ENCODE measurements at regions of chr10 and their contacts with region 1.

Region 1: DNA sequence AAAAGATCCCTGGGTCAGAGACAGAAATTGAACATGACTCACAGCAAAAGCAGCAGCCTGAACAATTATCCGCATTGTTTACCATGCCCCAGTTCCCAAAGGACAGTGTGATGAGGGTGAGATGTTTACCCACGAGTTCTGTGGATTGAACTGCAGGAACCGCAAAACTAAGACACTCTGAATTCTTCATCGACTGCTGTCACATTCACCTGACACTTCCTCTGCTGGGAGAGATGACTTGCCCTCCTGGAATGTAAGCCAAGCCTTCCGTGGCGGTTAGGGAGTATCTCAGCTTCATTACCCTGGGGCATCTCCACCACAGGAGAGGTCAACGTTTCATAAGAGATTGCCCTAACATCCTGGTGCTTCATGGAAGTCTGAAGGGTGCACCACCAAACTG is 374.6 kb upstream of the ADARB2 start:
- DNase-seq: peak; percentile 97
- H3K4me3 Mint-ChIP-seq: no peak overlapping the region
- H3K27ac Mint-ChIP-seq: peak overlapping the region; percentile 89
- H3K4me1 Mint-ChIP-seq: peaks cover 17% of the 10 kb centered on the region
- H3K27me3 Mint-ChIP-seq: no peaks in the 10 kb centered on the region
- CTCF ChIP-seq: no peak

Region 2: GRCh38 chr10:2122431-2123124 is 10.6 kb after region 1 on chr10:
- CTCF ChIA-PET with region 1: no interaction called
- POLR2A ChIA-PET with region 1: interaction called, 13 read pairs
- intact Hi-C with region 1: no loop called
- DNase-seq: peak; percentile 57
- H3K4me3 Mint-ChIP-seq: no peak overlapping the region
- H3K27ac Mint-ChIP-seq: peak overlapping the region; percentile 80
- H3K4me1 Mint-ChIP-seq: peaks cover 41% of the 10 kb centered on the region
- H3K27me3 Mint-ChIP-seq: no peaks in the 10 kb centered on the region
- CTCF ChIP-seq: no peak

Region 3: DNA sequence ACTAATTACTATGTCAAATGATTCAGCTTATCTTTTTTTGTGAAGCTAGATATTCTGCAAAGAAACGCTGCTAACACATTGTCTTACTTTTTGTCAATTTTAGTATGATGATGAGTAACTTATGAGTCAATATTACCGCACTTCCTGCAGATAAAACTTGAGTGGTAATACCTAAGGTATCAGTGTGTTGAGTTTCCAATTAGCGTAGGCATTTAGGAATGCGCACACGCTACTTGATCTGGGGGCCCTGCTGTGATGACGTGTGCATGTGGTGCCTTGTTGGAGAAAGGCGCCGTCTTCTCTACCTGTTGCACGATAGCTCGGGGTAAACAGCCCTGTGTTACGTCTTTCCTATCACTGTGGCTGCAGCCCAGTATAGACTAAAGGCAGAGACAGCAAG is 102.1 kb after region 1 on chr10:
- CTCF ChIA-PET with region 1: no interaction called
- POLR2A ChIA-PET with region 1: no interaction called
- intact Hi-C with region 1: loop called (anchors 10 kb)
- DNase-seq: peak; percentile 88
- H3K4me3 Mint-ChIP-seq: peak overlapping the region; percentile 40
- H3K27ac Mint-ChIP-seq: no peak overlapping the region
- H3K4me1 Mint-ChIP-seq: peaks cover 15% of the 10 kb centered on the region
- H3K27me3 Mint-ChIP-seq: no peaks in the 10 kb centered on the region
- CTCF ChIP-seq: no peak

Measured in MCF 10A (cell line).